Naive thymus-derived CD4-positive, alpha-beta T cell (primary cell): ENCODE measurements at regions of chr6 and their contacts with region 1.

Region 1: GRCh38 chr6:42217519-42218367 is at the start of gene MRPS10:
- DNase-seq: peak; percentile 72 to 92 (median 87)
- ATAC-seq: peak; percentile 100
- H3K4me3 ChIP-seq: peak within 1 kb of the TSS; percentile 96
- H3K4me3 Mint-ChIP-seq: peak within 1 kb of the TSS; percentile 92 to 100 (median 98)
- H3K27ac ChIP-seq: peak within 1 kb of the TSS; percentile 77
- H3K27ac Mint-ChIP-seq: peak within 1 kb of the TSS; percentile 87 to 99 (median 97)
- H3K4me1 ChIP-seq: peaks cover 9 to 14% of the 10 kb centered on the region in 2 donors
- H3K4me1 Mint-ChIP-seq: peaks cover 7 to 34% (median 24%) of the 10 kb centered on the region in 7 donors
- H3K27me3 ChIP-seq: no peaks in the 10 kb centered on the region
- H3K27me3 Mint-ChIP-seq: no peaks in the 10 kb centered on the region
- total RNA-seq, gene MRPS10: 17.0 to 30.3 (median 25.3) TPM

Region 2: GRCh38 chr6:41451039-41451438 is 766.7 kb before region 1 on chr6:
- CTCF ChIA-PET with region 1: no interaction called
- POLR2A ChIA-PET with region 1: no interaction called
- intact Hi-C with region 1: no loop called
- DNase-seq: no peak
- ATAC-seq: no peak
- H3K4me3 ChIP-seq: no peak overlapping the region
- H3K4me3 Mint-ChIP-seq: no peak overlapping the region
- H3K27ac ChIP-seq: no peak overlapping the region
- H3K27ac Mint-ChIP-seq: no peak overlapping the region
- H3K4me1 ChIP-seq: no peaks in the 10 kb centered on the region
- H3K4me1 Mint-ChIP-seq: peaks cover 0 to 11% (median 0%) of the 10 kb centered on the region in 7 donors
- H3K27me3 ChIP-seq: no peaks in the 10 kb centered on the region
- H3K27me3 Mint-ChIP-seq: peaks cover 0 to 13% (median 0%) of the 10 kb centered on the region in 5 donors

Region 3: DNA sequence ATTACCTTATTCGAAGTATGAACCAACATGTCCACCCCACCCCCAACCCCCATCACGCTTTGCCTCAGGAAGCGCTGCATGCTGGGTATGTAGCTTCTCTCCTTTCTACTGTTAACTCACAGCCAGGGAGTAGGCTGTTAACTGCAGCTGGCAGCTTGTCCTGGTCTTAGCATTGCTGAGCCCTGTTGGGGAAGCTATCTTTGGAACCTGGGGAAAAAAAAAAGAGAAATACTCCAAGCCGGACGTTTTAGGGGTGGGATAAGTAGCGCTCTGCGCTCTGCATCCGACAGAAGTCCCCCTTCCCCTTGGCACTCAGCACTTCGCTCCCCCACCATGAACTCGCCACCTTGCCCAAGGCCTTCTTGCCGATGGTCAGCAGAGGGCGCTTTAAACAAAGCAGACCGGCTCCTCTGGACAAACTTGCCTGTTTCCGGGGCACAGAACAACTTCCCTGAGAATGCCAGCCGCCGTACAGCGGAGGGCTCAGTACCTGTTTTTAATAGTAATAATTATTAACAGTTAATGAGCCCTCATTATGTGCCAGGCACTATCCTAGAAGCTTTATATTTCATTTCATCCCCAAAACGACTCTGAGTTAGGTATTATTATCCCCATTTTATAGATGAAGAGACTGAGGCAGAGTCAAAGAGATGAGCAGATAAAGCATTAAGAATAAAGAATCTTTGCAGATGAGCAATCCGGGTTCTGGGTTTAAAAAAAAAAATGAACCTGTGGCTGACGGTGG is 614.7 kb before region 1 on chr6:
- CTCF ChIA-PET with region 1: no interaction called
- POLR2A ChIA-PET with region 1: no interaction called
- intact Hi-C with region 1: loop called in 1 of 2 experiments (anchors 1 kb)
- DNase-seq: peak; percentile 49 to 78 (median 68)
- ATAC-seq: peak; percentile 86
- H3K4me3 ChIP-seq: no peak overlapping the region
- H3K4me3 Mint-ChIP-seq: peak overlapping the region in 6 of 10 donors; percentile 24 to 56 (median 34)
- H3K27ac ChIP-seq: no peak overlapping the region
- H3K27ac Mint-ChIP-seq: no peak overlapping the region
- H3K4me1 ChIP-seq: peaks cover 4 to 7% of the 10 kb centered on the region in 2 donors
- H3K4me1 Mint-ChIP-seq: peaks cover 4 to 7% (median 5%) of the 10 kb centered on the region in 7 donors
- H3K27me3 ChIP-seq: no peaks in the 10 kb centered on the region
- H3K27me3 Mint-ChIP-seq: peaks cover 0 to 7% (median 0%) of the 10 kb centered on the region in 5 donors

Region 4: GRCh38 chr6:41901882-41902519 is 315.7 kb before region 1 on chr6:
- CTCF ChIA-PET with region 1: interaction called, 7 read pairs
- POLR2A ChIA-PET with region 1: no interaction called
- intact Hi-C with region 1: loop called in 1 of 2 experiments (anchors 1 kb)
- DNase-seq: peak in 8 of 9 donors; percentile 42 to 66 (median 52)
- ATAC-seq: peak; percentile 78
- H3K4me3 ChIP-seq: no peak overlapping the region
- H3K4me3 Mint-ChIP-seq: no peak overlapping the region
- H3K27ac ChIP-seq: no peak overlapping the region
- H3K27ac Mint-ChIP-seq: peak overlapping the region in 7 of 9 donors; percentile 5 to 61 (median 14)
- H3K4me1 ChIP-seq: peaks cover 0 to 7% of the 10 kb centered on the region in 2 donors
- H3K4me1 Mint-ChIP-seq: peaks cover 8 to 27% (median 23%) of the 10 kb centered on the region in 7 donors
- H3K27me3 ChIP-seq: no peaks in the 10 kb centered on the region
- H3K27me3 Mint-ChIP-seq: no peaks in the 10 kb centered on the region

Region 5: GRCh38 chr6:42075159-42075838 is 142.4 kb before region 1 on chr6:
- CTCF ChIA-PET with region 1: interaction called, 3 read pairs
- POLR2A ChIA-PET with region 1: no interaction called
- intact Hi-C with region 1: loop called (anchors 1 to 2 kb)
- DNase-seq: peak in 8 of 9 donors; percentile 30 to 69 (median 36)
- ATAC-seq: no peak
- H3K4me3 ChIP-seq: no peak overlapping the region
- H3K4me3 Mint-ChIP-seq: no peak overlapping the region
- H3K27ac ChIP-seq: no peak overlapping the region
- H3K27ac Mint-ChIP-seq: peak overlapping the region in 6 of 9 donors; percentile 17 to 69 (median 52)
- H3K4me1 ChIP-seq: no peaks in the 10 kb centered on the region
- H3K4me1 Mint-ChIP-seq: peaks cover 0 to 12% (median 4%) of the 10 kb centered on the region in 7 donors
- H3K27me3 ChIP-seq: no peaks in the 10 kb centered on the region
- H3K27me3 Mint-ChIP-seq: no peaks in the 10 kb centered on the region

Region 6: DNA sequence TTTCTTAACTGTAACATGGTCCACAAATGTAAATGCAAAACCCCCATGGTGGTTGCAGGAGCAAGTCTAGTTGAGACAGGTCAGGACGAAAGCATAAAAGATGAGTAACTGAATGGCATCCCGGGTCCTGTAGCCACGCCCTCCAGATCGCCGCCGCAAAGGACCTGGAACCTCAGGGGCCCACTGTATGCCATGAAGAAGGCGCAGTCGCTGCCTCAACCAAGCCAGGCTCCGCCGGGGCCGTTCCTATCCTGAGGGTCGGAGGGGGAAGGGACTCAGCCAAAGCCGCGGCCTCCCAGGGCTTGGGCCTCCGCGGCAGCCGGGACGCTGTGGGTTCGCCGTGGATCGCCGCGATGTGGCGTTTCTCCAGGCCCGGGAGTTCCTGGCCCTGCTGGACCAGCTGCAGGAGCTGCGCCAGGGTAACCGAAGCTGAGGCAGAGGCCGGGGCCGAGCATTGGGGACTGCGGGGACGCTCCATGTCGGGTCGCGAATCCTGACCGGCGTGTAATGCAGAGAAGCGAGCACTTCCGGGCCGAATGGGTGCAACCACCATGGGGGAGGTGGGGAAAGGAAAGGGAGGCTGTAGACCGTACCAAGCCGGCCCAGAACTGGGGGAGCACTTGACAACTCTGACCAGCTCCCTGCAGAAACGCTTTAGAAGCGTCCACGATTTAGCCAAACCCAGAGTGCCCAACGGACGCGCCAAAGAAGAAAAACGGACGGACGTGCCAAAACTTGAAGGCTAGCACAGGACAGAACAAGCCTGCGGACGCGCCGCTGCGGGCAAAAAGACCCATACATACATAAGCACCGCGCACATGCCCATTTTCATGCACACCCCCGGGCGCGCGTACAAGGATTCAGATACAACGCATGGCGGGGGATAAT is 672.8 kb after region 1 on chr6:
- CTCF ChIA-PET with region 1: no interaction called
- POLR2A ChIA-PET with region 1: no interaction called
- intact Hi-C with region 1: loop called in 1 of 2 experiments (anchors 5 kb)
- DNase-seq: peak; percentile 70 to 90 (median 87)
- ATAC-seq: peak; percentile 99
- H3K4me3 ChIP-seq: peak overlapping the region; percentile 89
- H3K4me3 Mint-ChIP-seq: peak overlapping the region; percentile 94 to 100 (median 98)
- H3K27ac ChIP-seq: peak overlapping the region; percentile 87
- H3K27ac Mint-ChIP-seq: peak overlapping the region; percentile 89 to 99 (median 98)
- H3K4me1 ChIP-seq: peaks cover 0 to 8% of the 10 kb centered on the region in 2 donors
- H3K4me1 Mint-ChIP-seq: peaks cover 0 to 26% (median 14%) of the 10 kb centered on the region in 7 donors
- H3K27me3 ChIP-seq: no peaks in the 10 kb centered on the region
- H3K27me3 Mint-ChIP-seq: no peaks in the 10 kb centered on the region